Posterior vena cava (tissue), 2 donors: ENCODE measurements at regions of chr2 and their contacts with region 1.

Region 1: GRCh38 chr2:224357098-224357901 is 44.6 kb downstream of the FAM124B start:
- DNase-seq: no peak

Region 2: GRCh38 chr2:224650815-224651439 is 293.6 kb after region 1 on chr2:
- intact Hi-C with region 1: loop called (anchors 5 kb)
- DNase-seq: no peak

Region 3: GRCh38 chr2:224778474-224778877 is 421.2 kb after region 1 on chr2:
- intact Hi-C with region 1: loop called in 1 of 2 experiments (anchors 10 kb)
- DNase-seq: no peak